ENCODE measurements at regions of chr14 and their contacts with region 1.

Region 1: DNA sequence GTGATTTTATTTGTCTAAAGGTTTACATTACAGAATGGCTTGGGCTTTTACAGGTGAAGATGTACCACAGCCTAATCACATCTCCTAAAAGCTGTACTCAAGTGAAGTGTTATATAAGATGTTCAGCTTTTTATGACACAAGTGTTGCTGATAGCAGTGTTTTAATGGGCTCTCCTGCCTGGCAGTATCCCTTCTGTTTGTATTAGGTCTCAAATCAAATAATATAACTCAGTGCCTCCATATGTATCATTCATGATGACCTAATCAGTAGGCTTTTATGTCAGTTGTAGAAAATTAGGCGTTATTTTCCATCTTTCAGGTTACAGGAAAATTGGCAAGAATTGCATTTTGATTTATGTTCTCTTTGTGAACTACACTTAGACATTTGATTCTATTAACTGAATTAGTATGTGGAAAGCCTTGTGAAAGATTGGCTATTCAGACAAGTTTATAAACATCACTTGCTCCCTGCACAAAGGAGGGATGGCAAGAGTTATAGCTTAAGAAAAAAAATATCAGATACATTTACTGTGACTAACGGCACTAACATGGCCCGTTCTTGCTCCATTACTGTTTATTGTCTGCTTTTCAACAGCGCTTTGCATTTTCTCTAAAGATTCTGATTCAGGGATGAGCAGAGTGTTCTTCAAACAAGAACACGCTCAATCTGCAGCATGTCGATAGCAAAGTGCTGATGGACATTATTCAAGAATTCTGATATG is 143.7 kb upstream of the DIO2 start:
- DNase-seq: no peak
- H3K4me3 ChIP-seq: no peak overlapping the region
- H3K27ac ChIP-seq: no peak overlapping the region
- H3K4me1 ChIP-seq: no peaks in the 10 kb centered on the region
- H3K27me3 ChIP-seq: no peaks in the 10 kb centered on the region
- CTCF ChIP-seq: no peak
- POLR2A ChIP-seq: no peak

Region 2: GRCh38 chr14:80315681-80316080 is 39.3 kb before region 1 on chr14:
- intact Hi-C with region 1: loop called (anchors 2 kb)
- DNase-seq: no peak
- H3K4me3 ChIP-seq: no peak overlapping the region
- H3K27ac ChIP-seq: peak overlapping the region in 1 of 2 donors; percentile 49
- H3K4me1 ChIP-seq: no peaks in the 10 kb centered on the region
- H3K27me3 ChIP-seq: no peaks in the 10 kb centered on the region
- CTCF ChIP-seq: no peak
- POLR2A ChIP-seq: no peak

Region 3: DNA sequence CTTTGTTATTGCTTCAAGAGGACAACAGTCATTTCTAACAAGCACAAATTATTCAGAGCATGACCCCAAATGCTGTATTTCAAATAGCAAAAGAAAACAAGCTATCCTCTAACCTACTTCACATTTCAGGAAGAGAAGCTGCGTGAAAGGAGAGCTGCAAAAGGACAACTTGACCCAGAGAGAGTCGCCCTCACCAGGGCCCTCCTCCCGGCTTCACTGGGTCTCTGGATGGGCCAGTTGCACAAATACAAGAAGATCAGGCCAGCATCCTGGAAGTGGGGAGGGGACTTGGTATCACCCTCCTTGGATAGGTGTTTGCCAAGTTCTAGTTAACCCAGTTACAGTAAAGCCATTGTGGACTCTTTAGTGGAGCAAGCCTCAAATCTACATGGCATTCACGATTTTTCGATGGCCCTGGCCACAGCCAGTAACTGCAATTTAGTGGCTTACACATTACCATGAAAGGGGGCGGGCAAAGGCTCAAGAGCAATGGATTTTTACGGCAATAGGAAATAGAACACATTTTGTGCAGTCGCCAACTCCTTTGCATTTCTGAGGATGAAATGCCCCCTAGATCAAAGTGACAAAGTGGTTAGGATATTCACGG is 23.2 kb after region 1 on chr14:
- intact Hi-C with region 1: no loop called
- DNase-seq: no peak
- H3K4me3 ChIP-seq: no peak overlapping the region
- H3K27ac ChIP-seq: no peak overlapping the region
- H3K4me1 ChIP-seq: no peaks in the 10 kb centered on the region
- H3K27me3 ChIP-seq: no peaks in the 10 kb centered on the region
- CTCF ChIP-seq: no peak
- POLR2A ChIP-seq: no peak

Measured in breast epithelium (tissue), 4 donors.